GM23248 (cell line): ENCODE measurements at regions of chr1 and their contacts with region 1.

Region 1: GRCh38 chr1:39926343-39926793 is 24.7 kb upstream of the MYCL start:
- DNase-seq: peak; percentile 49
- H3K4me3 ChIP-seq: no peak overlapping the region
- H3K27ac ChIP-seq: no peak overlapping the region
- H3K4me1 ChIP-seq: no peaks in the 10 kb centered on the region
- H3K27me3 ChIP-seq: no peaks in the 10 kb centered on the region

Region 2: GRCh38 chr1:39733161-39733560 is 193.2 kb before region 1 on chr1:
- in situ Hi-C with region 1: no loop called
- DNase-seq: peak; percentile 19
- H3K4me3 ChIP-seq: no peak overlapping the region
- H3K27ac ChIP-seq: no peak overlapping the region
- H3K4me1 ChIP-seq: no peaks in the 10 kb centered on the region
- H3K27me3 ChIP-seq: peaks cover 43% of the 10 kb centered on the region

Region 3: DNA sequence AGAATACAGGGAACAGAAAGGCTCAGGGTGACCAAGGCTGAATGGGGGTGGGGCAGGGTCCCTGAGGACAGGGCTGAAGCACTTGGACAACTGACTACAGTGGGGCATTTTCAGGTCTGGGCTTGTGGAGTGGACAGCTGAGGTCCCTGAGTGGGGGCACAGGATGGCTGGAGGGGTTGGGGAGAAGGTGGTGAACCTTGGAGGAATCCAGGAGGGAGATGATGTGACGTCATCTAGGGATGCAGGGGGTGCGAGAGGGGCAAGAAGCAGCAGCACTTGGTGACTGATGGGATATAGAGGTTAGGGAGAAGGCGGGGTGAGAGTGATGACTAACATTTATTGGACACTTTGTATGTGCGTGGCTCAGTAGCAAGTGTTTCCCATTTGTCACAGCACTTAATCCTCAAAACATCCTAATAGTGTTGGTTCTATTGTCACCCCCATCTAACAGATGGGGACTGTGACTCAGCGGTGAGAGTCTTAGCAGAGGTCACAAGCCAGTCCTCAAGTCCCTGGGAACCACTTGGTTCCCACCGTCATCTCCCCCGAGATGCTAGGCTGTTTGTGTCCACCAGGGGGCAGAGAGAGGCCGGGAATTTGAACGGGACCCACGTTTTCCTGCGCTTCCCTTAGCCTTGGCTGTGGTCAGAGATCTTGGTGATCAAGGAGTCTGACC is 109.8 kb before region 1 on chr1:
- in situ Hi-C with region 1: no loop called
- DNase-seq: peak; percentile 92
- H3K4me3 ChIP-seq: no peak overlapping the region
- H3K27ac ChIP-seq: no peak overlapping the region
- H3K4me1 ChIP-seq: no peaks in the 10 kb centered on the region
- H3K27me3 ChIP-seq: no peaks in the 10 kb centered on the region

Region 4: DNA sequence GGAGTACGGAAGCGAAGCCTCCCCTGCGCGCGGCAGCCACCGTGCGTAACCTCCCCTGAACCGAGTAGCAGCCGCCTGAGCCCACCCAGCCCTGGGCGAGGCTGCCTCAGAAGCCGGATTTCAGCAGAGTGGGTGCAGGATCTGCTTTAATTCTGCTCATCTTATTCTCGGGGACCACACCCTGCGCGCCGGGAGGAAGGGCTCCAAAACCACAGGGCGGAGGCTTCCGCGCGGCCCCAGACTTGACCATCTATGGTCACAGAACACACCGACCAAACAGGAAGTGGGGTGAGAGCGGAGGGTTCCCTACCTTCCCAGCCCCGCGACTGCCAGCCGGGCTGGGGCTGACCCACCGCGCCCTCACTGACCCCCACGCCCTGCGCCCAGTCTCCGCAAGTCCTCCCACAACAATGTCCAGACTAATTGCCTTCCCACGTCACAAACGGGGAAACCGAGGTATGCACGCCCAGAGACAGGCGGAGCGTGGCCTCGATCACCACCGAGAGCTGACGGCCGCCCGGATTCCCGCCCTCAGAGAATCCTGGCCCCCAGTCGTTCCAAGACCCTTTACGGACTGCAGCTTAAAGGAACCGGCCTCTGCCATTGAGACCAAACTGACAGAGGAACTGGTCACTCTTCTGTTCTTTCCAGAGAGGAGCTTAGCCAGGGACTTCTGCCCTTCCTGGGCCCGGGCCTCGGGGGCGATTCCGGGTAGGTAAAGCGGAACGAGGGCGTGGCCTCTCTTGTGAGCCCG is 113.6 kb after region 1 on chr1:
- in situ Hi-C with region 1: loop called (anchors 10 kb)
- DNase-seq: peak; percentile 88
- H3K4me3 ChIP-seq: peak overlapping the region; percentile 99
- H3K27ac ChIP-seq: peak overlapping the region; percentile 95
- H3K4me1 ChIP-seq: peaks cover 53% of the 10 kb centered on the region
- H3K27me3 ChIP-seq: no peaks in the 10 kb centered on the region